Posterior cingulate gyrus (tissue), 11 donors: ENCODE measurements at regions of chr9 and their contacts with region 1.

Region 1: DNA sequence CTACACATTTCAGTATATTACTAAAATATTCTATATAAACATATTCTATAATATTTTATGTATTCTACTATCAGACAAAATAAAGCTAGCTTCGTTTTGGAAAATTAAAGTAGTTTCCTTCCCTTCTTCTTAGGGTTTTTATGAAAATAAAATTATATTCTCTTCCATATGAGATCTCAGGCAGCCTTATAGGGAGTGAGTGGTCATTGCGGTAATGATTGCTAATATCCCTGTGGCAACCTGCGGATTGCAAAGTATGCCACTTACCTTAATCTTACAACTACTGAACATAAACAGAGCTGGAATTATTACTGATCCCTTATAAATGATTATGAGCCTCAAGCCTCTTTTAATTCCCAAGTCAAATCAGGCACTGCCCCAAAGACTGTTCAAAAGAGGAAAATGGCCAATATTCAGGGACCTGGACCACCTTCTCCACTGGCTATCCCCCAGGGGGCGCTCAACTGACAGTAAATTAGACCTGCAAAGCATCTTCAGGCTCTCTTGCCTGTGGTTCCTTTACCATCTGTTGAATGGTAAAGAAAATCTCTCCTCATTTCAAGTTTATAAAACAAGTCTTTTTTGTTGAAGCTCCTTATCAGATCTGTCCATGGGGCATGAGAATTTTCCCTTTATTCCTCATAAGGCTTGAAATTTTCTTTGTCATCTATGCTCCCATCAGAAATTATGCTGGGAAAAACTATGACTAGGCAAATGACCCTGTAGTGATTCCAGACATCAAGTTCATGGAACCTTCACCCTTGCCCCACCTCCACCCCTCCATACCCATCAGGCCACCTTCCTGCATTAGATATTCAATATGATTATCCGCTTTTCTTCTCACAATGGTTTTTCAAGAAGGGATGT is 163.9 kb downstream of the CEMIP2 start:
- DNase-seq: peak in 9 of 10 donors; percentile 31 to 93 (median 70)

Region 2: GRCh38 chr9:70865471-70865870 is 739.0 kb before region 1 on chr9:
- intact Hi-C with region 1: no loop called
- DNase-seq: no peak

Region 3: GRCh38 chr9:71663931-71664459 is 59.6 kb after region 1 on chr9:
- intact Hi-C with region 1: loop called (anchors 10 kb)
- DNase-seq: no peak

Region 4: DNA sequence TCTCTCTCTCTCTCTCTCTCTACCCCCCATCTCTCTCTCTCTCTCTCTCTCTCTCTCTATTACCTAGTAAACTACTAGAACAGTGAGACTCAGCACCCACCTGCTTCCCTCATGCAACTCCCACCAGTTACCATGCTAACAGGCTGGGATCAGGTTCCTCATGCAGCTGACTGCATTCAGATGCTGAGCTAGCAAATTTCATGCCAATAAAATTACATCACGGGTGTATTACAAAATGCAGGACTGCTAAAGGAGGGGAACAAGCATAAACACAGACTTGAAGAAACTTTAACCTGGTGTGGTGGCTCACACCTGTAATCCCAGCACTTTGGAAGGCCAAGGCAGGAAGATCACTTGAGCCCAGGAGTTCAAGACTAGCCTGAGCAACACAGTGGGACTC is 87.9 kb after region 1 on chr9:
- intact Hi-C with region 1: no loop called
- DNase-seq: no peak

Region 5: DNA sequence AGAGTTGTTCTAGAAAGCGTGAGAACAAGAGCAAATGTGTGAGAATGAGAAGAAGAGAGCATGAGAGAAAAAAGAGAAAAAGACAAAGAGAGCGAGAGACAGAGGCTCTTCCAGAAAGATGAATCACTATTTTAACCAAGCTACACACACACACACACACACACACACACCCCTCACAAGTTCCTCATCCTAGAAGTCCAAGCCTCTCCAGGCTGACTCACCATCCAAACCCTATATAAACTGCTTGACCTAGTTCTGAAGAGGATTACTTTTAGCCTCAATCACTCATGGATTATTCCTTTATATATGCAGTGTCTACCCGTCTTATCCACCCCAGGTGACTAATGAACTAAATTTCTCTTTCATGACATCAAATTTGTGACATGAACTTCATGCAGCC is 418.4 kb after region 1 on chr9:
- intact Hi-C with region 1: no loop called
- DNase-seq: no peak